Tibial artery (tissue), 4 donors: ENCODE measurements at regions of chr7 and their contacts with region 1.

Region 1: DNA sequence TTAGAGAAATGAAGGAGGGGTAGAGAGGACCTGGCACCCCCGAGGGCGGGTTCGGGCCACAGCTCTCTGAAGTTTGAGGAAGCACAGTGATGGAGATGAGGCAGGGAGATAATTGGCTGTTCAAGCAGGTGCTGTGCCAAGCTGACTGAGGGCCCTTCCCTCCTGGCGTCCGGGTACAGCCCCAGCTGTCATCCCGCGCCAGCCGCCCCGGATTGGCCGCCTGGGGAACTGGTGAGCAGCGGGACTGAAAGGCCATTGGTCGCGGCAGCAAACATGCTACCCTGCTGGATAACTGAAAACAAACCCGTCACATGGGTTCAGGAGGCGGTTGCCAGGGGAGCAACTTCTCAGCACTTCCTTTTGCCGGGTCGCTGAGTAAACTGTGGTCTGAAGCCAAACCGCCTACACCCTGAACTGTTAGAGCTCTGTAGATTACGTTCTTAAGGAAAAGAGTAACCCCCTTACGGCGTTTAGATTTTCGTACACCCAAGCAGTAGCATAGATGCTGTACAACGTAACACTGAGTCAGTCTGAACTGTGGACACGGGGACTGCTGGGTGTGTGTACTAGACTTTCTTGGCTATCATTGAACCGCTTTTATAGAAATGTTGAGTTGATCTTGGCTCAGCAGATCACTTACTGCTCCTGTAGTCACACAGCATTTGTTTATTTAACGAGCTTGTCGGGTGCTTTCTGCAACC is 1.3 kb downstream of the INSIG1 start:
- DNase-seq: peak; percentile 97 to 98
- H3K4me3 ChIP-seq: peak overlapping the region; percentile 89 to 98
- H3K27ac ChIP-seq: peak overlapping the region; percentile 88 to 92
- H3K4me1 ChIP-seq: peaks cover 0 to 27% (median 20%) of the 10 kb centered on the region in 4 donors
- H3K27me3 ChIP-seq: no peaks in the 10 kb centered on the region
- CTCF ChIP-seq: peak in 1 of 2 experiments; percentile 12

Region 2: GRCh38 chr7:155003376-155004214 is 295.4 kb before region 1 on chr7:
- intact Hi-C with region 1: loop called (anchors 5 kb)
- DNase-seq: peak; percentile 54 to 91
- H3K4me3 ChIP-seq: peak overlapping the region; percentile 80 to 100
- H3K27ac ChIP-seq: peak overlapping the region; percentile 84 to 87
- H3K4me1 ChIP-seq: peaks cover 0 to 16% (median 14%) of the 10 kb centered on the region in 4 donors
- H3K27me3 ChIP-seq: no peaks in the 10 kb centered on the region
- CTCF ChIP-seq: no peak

Region 3: GRCh38 chr7:155119801-155120382 is 179.1 kb before region 1 on chr7:
- intact Hi-C with region 1: no loop called
- DNase-seq: no peak
- H3K4me3 ChIP-seq: no peak overlapping the region
- H3K27ac ChIP-seq: no peak overlapping the region
- H3K4me1 ChIP-seq: no peaks in the 10 kb centered on the region
- H3K27me3 ChIP-seq: no peaks in the 10 kb centered on the region
- CTCF ChIP-seq: no peak

Region 4: GRCh38 chr7:155190688-155191087 is 108.3 kb before region 1 on chr7:
- intact Hi-C with region 1: loop called (anchors 10 kb)
- DNase-seq: no peak
- H3K4me3 ChIP-seq: no peak overlapping the region
- H3K27ac ChIP-seq: no peak overlapping the region
- H3K4me1 ChIP-seq: peaks cover 0 to 6% (median 2%) of the 10 kb centered on the region in 4 donors
- H3K27me3 ChIP-seq: peaks cover 0 to 28% of the 10 kb centered on the region in 2 donors
- CTCF ChIP-seq: peak; percentile 85 to 89

Region 5: GRCh38 chr7:155257482-155258225 is 41.3 kb before region 1 on chr7:
- intact Hi-C with region 1: loop called (anchors 1 kb)
- DNase-seq: peak; percentile 81 to 93
- H3K4me3 ChIP-seq: peak overlapping the region; percentile 24 to 32
- H3K27ac ChIP-seq: peak overlapping the region; percentile 73 to 90
- H3K4me1 ChIP-seq: peaks cover 0 to 29% (median 13%) of the 10 kb centered on the region in 4 donors
- H3K27me3 ChIP-seq: peaks cover 0 to 17% of the 10 kb centered on the region in 2 donors
- CTCF ChIP-seq: no peak

Region 6: DNA sequence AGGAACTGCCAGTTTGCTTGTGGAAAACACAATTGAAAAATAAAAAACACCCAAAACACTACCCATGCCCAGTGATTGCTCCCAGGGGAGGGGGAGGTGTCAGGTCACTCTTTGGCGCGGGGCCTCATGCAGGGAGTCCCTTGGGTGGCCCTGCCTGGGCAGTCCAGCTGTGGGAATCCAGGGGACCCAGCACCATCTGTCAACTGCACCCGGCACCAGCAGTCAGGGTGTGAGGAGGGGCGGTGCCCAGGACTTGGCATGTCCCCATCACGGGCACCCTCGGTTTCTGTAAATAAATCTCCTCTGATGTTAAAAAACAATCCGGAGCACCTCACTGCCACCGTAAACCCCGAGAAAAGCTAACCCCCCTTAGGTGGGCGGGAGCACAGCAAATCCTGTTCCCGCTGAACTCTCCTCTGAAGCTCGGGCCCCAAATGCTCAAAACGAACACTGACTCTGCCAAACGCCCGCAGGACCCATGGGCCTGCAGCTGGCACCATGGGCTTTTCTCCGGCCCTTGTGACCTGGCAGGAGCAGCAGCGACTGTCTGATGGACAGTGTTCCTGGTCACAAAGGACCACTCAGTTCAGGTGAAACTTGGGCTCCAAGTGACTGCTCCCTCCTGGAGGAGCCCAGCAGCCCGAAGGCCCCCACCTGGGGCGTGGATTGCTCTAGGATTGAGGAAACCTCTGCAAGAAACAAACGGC is 140.5 kb after region 1 on chr7:
- intact Hi-C with region 1: no loop called
- DNase-seq: no peak
- H3K4me3 ChIP-seq: no peak overlapping the region
- H3K27ac ChIP-seq: no peak overlapping the region
- H3K4me1 ChIP-seq: no peaks in the 10 kb centered on the region
- H3K27me3 ChIP-seq: peaks cover 0 to 71% of the 10 kb centered on the region in 2 donors
- CTCF ChIP-seq: no peak